MCF 10A (cell line): ENCODE measurements at regions of chr2 and their contacts with region 1.

Region 1: DNA sequence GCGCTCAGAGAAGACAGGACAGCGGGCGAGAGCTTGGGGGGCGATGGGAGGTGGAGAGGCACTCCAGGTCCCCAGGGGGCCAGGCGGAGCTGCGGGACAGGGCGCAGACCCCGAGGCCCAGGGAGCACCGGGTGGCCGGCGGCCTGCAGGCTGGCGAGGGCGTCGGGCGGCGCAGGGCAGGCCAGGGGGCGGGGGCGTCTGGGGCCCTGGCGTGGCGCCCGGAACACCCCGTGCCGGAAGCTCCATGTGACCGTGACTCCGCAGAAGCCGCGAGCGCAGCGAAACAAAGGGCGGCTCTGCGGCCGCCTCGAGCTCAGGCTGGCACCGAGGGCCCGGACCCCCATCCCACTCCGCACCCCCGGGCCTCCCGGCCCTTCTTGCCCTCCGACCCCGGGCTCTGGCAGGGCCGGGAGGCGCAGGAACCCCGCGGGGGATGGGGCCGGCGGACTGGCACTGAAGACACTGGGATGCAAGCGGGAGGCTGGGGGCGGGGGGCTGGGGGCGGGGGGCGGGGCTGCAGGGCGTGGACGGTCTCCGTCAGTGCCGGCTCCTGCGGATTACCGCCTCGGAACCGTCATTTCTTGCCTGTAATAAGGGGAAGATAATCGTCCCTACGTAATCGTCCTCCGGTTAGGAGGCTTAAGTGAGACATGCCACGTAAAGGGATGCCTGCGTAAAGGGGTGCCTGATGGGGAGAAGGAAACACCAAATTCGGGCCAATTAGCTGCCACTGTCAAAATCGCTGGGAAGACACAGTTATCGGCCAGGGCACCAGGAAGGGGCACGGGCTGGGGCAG is 19.2 kb downstream of the SH2D6 start:
- DNase-seq: peak; percentile 90
- H3K4me3 Mint-ChIP-seq: peak overlapping the region; percentile 71
- H3K27ac Mint-ChIP-seq: peak overlapping the region; percentile 77
- H3K4me1 Mint-ChIP-seq: peaks cover 31% of the 10 kb centered on the region
- H3K27me3 Mint-ChIP-seq: no peaks in the 10 kb centered on the region
- CTCF ChIP-seq: no peak

Region 2: DNA sequence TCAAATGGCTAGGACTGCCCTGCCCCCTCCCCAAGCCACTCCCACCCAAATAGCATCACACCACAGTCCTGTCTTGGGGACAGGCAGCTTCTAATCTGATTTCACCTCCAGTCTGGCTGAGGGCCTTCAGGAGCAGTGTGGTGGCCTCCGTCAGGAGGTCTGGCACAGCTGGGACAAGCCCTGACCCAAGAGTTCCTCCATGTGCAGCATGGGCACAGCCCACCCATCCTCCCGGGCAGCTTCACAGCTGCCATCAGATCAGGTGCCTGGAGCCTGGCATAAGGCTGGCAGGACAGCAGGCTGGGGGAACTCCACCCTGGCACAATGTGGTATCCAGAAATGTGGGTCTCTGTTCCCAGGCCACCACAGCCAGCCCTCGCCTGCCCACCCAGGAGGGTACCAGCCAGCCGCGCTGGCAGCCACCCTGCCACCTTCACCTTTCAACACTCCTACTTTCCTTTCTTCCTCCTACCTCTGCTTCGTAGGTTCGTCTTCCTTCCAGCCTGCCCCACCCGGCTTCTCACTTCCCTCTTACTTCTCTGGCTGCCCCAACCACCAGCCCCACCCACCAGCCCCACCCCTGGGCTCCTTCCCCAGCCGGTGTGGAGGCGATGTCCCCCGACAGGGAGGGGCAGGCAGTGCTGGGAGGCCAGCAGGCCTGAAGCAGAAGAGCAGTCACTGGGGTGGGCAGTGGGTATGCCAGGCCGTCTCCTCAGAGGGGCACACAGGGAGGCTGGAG is 27.7 kb before region 1 on chr2 and contains the start of gene CAPG:
- CTCF ChIA-PET with region 1: no interaction called
- POLR2A ChIA-PET with region 1: interaction called, 11 read pairs
- intact Hi-C with region 1: no loop called
- DNase-seq: peak; percentile 73
- H3K4me3 Mint-ChIP-seq: peak within 1 kb of the TSS; percentile 70
- H3K27ac Mint-ChIP-seq: peak within 1 kb of the TSS; percentile 83
- H3K4me1 Mint-ChIP-seq: peaks cover 34% of the 10 kb centered on the region
- H3K27me3 Mint-ChIP-seq: no peaks in the 10 kb centered on the region
- CTCF ChIP-seq: no peak
- total RNA-seq, gene CAPG: 173 and 188 TPM in 2 replicates

Region 3: GRCh38 chr2:85420536-85421259 is 17.0 kb before region 1 on chr2:
- CTCF ChIA-PET with region 1: interaction called, 8 read pairs
- POLR2A ChIA-PET with region 1: interaction called, 12 read pairs
- intact Hi-C with region 1: no loop called
- DNase-seq: peak; percentile 83
- H3K4me3 Mint-ChIP-seq: peak overlapping the region; percentile 24
- H3K27ac Mint-ChIP-seq: peak overlapping the region; percentile 92
- H3K4me1 Mint-ChIP-seq: peaks cover 30% of the 10 kb centered on the region
- H3K27me3 Mint-ChIP-seq: no peaks in the 10 kb centered on the region
- CTCF ChIP-seq: peak; percentile 99

Region 4: DNA sequence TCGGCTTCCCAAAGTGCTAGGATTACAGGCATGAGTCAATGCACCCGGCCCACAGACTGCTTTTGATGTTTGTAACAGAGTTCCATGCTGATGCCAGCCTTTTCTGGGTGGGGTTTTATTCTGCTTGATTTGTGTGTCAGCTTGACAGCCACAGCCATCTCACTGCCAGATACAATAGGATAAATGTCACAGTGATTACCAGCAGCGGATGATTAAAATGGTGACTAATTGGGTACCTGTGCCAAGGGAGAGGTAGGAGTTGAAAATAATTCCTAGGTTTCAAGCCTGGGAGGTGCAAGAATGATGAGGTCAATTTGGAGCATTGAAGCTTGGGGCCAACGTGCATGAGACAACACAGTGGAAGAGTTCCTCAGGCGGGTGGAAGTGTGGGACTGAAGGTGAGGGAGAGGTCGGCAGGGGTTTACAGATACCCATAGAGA is 20.2 kb after region 1 on chr2:
- CTCF ChIA-PET with region 1: interaction called, 3 read pairs
- POLR2A ChIA-PET with region 1: interaction called, 16 read pairs
- intact Hi-C with region 1: no loop called
- DNase-seq: peak; percentile 96
- H3K4me3 Mint-ChIP-seq: no peak overlapping the region
- H3K27ac Mint-ChIP-seq: peak overlapping the region; percentile 40
- H3K4me1 Mint-ChIP-seq: peaks cover 17% of the 10 kb centered on the region
- H3K27me3 Mint-ChIP-seq: no peaks in the 10 kb centered on the region
- CTCF ChIP-seq: no peak

Region 5: DNA sequence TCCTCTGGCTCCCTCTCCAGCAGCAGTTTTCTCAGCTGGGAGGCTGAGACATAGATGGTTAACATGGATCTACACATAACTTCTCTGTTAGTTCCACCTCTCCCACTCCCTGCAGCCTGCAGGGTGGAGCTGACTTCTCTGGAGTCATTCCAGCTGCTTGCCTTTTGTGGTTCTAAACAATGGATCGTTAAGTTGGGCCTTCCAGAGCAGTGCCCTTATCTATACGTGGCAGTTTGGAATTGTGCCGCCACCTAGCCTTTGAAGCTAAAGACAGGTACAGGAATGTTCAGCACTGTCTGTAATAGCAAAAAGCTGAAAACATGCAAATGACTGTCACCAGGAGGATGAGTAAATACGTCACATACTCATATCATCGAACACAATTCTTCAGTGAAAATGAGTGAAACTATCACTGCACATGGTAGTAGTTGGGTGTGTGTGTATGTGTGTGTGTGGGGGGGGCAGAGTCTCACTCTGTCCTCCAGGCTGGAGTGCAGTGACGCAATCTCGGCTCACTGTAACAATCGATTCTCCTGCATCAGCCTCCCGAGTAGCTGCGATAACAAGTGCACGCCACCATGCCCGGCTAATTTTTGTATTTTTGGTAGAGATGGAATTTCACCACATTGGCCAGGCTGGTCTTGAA is 31.1 kb after region 1 on chr2:
- CTCF ChIA-PET with region 1: interaction called, 3 read pairs
- POLR2A ChIA-PET with region 1: interaction called, 30 read pairs
- intact Hi-C with region 1: no loop called
- DNase-seq: peak; percentile 87
- H3K4me3 Mint-ChIP-seq: no peak overlapping the region
- H3K27ac Mint-ChIP-seq: no peak overlapping the region
- H3K4me1 Mint-ChIP-seq: peaks cover 29% of the 10 kb centered on the region
- H3K27me3 Mint-ChIP-seq: no peaks in the 10 kb centered on the region
- CTCF ChIP-seq: no peak

Region 6: GRCh38 chr2:85504778-85505323 is 67.2 kb after region 1 on chr2:
- CTCF ChIA-PET with region 1: no interaction called
- POLR2A ChIA-PET with region 1: interaction called, 23 read pairs
- intact Hi-C with region 1: loop called (anchors 2 kb)
- DNase-seq: peak; percentile 98
- H3K4me3 Mint-ChIP-seq: peak overlapping the region; percentile 21
- H3K27ac Mint-ChIP-seq: peak overlapping the region; percentile 55
- H3K4me1 Mint-ChIP-seq: peaks cover 30% of the 10 kb centered on the region
- H3K27me3 Mint-ChIP-seq: no peaks in the 10 kb centered on the region
- CTCF ChIP-seq: no peak

Region 7: DNA sequence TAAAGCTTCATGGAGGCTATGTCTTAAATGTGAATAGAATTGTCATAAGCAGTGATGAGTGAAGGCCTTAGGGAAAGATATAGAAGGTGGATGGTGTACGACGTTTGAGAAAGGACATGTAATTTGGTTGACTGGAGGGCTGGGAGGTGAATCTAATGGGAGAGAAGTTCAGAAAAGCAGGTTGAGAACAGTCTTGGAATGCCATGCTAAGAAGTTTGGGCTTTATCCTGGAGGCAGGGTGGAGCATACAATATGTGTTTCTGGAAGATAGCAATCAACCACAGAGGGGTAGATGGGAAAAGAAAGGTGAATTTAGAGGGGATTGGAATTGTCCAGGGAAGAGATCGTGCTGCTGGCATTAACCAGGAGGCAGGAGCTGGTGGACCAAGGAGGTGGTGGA is 132.6 kb after region 1 on chr2:
- CTCF ChIA-PET with region 1: no interaction called
- POLR2A ChIA-PET with region 1: no interaction called
- intact Hi-C with region 1: no loop called
- DNase-seq: no peak
- H3K4me3 Mint-ChIP-seq: no peak overlapping the region
- H3K27ac Mint-ChIP-seq: no peak overlapping the region
- H3K4me1 Mint-ChIP-seq: no peaks in the 10 kb centered on the region
- H3K27me3 Mint-ChIP-seq: peaks cover 13% of the 10 kb centered on the region
- CTCF ChIP-seq: no peak